ENCODE measurements at regions of chr1 and their contacts with region 1.

Region 1: DNA sequence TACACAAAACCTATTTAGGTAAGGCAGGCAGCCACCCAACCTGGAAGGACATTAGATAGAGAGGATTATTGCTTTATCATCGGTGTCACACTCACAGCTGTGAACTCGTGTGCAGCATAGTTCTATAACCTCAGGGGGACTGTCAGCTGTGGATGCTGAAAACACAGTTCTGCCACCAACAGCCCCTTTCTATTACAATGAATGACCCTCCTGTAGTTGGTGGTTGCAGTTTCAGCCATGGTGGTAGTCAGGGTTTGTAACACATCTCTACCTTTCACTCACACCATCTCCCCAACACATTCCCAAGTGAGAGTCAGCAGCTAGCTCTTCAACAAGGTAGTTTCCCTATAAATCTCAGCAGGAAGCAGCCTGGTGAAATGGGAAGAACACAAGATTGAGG is 136.8 kb downstream of the ZC3H11B start:
- DNase-seq: no peak

Region 2: DNA sequence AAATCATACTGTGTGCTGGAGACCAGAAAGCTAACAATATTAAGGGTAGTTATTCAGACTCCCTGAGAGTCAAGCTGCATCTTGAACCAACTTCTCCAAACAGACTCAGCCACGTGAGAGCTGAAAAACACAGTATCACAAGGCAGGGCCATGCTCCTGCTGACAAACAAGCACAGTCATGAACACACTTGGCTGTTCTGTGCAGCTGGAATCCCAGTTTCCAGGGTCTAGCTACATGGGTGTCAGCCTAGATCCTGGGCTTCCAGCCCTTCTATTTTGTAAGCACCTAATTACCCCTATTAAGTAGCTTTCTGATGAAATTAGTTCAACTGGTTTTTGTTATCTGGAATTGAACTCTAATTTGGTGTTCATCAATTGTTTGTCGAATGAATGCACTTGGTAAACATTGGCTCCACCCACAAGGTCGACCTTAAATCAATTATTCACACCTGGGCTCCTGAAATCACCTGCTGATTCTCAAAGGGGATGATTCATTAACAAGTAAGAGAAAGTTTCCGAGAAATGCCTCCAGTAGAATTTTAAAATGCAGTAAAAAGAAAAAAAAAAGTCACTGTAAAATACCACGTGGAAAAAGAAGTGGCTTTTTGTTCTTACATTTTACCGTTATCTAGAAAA is 42.5 kb before region 1 on chr1:
- intact Hi-C with region 1: no loop called
- DNase-seq: no peak

Region 3: GRCh38 chr1:219498666-219499065 is 22.6 kb after region 1 on chr1:
- intact Hi-C with region 1: loop called in 1 of 2 experiments (anchors 1 kb)
- DNase-seq: no peak